Transverse colon (tissue), 4 donors: ENCODE measurements at regions of chr11 and their contacts with region 1.

Region 1: DNA sequence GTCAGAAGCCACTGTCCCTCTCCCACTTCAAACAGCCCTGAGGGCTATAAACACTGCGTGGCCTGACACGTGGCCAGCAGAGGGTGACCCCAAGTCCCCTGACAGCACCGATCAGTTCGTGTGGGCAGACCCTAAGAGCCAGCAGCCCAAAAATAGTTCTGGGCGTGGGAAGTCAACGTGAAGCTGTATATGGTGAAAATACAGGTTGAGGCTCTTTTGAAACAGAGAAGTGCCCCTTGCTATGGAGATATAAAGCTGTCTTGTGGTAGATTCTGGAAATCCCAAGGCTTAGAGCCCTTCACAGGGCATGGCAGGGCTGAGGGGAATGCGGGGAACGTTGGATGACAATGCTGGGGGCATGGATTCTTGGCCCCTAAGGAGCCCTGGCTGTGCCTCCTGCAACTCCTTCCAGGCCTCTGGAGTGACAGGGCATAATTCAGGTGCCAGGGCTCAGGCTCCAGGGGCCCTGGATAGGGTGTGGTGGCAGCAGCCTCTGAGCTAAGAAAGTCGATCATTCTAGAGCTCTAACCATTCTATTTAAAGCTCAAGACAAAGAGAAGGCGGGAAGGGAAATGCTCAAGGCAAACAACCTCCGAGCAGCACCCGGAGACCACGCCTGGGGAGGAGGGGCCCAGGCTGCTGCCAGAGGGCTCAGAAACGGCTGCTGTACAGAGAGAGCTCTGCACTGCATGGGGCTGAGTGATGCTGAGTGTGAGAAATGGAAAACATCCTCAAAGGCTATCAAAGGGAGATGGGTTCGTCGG is 60.4 kb upstream of the CD5 start:
- DNase-seq: peak; percentile 62
- H3K4me3 ChIP-seq: peak overlapping the region in 1 of 4 donors; percentile 1
- H3K27ac ChIP-seq: peak overlapping the region; percentile 24 to 63 (median 33)
- H3K4me1 ChIP-seq: peaks cover 0 to 10% (median 9%) of the 10 kb centered on the region in 4 donors
- H3K27me3 ChIP-seq: no peaks in the 10 kb centered on the region
- CTCF ChIP-seq: no peak
- EP300 ChIP-seq: no peak
- POLR2A ChIP-seq: no peak

Region 2: DNA sequence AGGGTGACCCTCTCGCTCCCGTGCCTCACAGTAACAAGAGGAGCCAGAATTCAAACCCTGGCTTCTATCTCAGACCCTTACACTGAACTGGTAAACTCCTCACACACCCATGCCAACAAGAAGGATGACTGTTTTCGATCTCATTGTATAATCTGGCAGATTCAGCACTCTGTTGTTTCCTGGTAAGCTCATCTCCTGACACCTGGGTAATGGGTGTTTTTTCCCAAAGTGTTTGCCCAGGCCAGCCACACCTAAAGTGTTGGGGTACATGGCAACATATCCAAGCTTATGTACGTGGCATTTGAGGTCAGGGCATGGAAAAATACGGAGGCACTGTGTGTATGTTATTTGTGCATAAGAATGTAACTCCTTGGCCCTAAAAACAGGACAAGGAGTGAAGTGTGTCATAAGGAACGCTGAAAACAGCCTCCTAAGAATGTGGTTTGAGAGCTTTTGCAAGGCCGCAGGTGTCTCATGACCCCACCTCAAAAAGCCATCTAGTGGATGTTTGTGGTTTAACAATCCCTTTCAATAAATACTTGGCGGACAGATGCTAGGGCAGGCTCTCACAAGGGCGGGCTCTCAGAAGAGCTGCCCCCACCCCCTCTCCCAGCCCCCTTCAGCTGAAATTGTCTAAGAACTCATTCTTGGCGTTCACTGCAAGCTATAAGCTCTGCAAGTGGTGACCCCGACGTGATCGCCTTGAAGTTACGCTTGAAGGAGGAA is 285.5 kb before region 1 on chr11 and contains the start of gene MS4A15:
- in situ Hi-C with region 1: no loop called
- intact Hi-C with region 1: no loop called
- DNase-seq: no peak
- H3K4me3 ChIP-seq: no peak within 1 kb of the TSS
- H3K27ac ChIP-seq: no peak within 1 kb of the TSS
- H3K4me1 ChIP-seq: no peaks in the 10 kb centered on the region
- H3K27me3 ChIP-seq: peaks cover 8% of the 10 kb centered on the region
- CTCF ChIP-seq: peak; percentile 33 to 54 (median 52)
- EP300 ChIP-seq: no peak
- POLR2A ChIP-seq: no peak
- total RNA-seq, gene MS4A15: not detected

Region 3: GRCh38 chr11:60992842-60993409 is 49.0 kb before region 1 on chr11:
- in situ Hi-C with region 1: no loop called
- intact Hi-C with region 1: loop called (anchors 10 kb)
- DNase-seq: no peak
- H3K4me3 ChIP-seq: no peak overlapping the region
- H3K27ac ChIP-seq: no peak overlapping the region
- H3K4me1 ChIP-seq: peaks cover 0 to 16% (median 11%) of the 10 kb centered on the region in 4 donors
- H3K27me3 ChIP-seq: peaks cover 5% of the 10 kb centered on the region
- CTCF ChIP-seq: no peak
- EP300 ChIP-seq: no peak
- POLR2A ChIP-seq: no peak